Aorta (tissue), 5 donors: ENCODE measurements at regions of chr9 and their contacts with region 1.

Region 1: GRCh38 chr9:21789541-21790037 is 12.8 kb upstream of the MTAP start:
- DNase-seq: peak in 1 of 2 donors; percentile 62
- ATAC-seq: peak; percentile 89
- H3K4me3 ChIP-seq: no peak overlapping the region
- H3K27ac ChIP-seq: no peak overlapping the region
- H3K4me1 ChIP-seq: no peaks in the 10 kb centered on the region
- H3K27me3 ChIP-seq: no peaks in the 10 kb centered on the region

Region 2: DNA sequence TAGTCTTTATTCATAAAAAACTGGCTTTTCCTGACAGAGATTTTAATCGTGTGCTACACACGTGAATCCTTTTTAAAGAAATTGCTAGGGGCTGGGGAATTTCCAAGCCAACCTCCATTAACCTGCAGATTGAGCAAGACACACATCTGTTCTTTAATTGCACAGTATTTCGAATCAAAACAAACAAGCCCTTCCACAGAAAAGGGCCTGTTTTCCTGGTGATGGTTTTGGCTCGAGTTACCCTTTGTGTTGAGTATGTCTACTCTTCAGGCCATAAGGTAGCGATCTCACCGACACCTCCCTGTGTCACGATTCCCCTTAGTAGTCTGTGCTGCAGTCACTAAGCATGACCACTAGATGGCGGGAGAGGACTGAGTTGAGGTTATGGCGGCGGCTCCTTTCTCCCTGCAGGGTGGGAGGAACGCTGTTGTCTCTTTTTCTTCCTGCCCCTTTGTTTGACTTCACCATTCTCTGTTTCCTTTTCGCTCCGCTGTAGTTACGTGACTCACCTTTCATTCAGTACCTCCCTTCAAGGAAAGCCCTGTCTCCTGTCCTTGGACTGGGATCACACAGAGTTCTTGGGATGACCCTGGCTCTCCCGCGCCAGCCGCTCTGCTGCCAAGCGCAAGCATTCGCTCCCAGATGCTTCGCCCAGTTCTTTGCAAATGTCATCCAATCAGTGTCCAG is 1863.6 kb before region 1 on chr9:
- intact Hi-C with region 1: loop called in 1 of 2 experiments (anchors 10 kb)
- DNase-seq: peak in 1 of 2 donors; percentile 69
- ATAC-seq: peak; percentile 92
- H3K4me3 ChIP-seq: peak overlapping the region in 1 of 2 donors; percentile 6
- H3K27ac ChIP-seq: no peak overlapping the region
- H3K4me1 ChIP-seq: no peaks in the 10 kb centered on the region
- H3K27me3 ChIP-seq: no peaks in the 10 kb centered on the region

Region 3: DNA sequence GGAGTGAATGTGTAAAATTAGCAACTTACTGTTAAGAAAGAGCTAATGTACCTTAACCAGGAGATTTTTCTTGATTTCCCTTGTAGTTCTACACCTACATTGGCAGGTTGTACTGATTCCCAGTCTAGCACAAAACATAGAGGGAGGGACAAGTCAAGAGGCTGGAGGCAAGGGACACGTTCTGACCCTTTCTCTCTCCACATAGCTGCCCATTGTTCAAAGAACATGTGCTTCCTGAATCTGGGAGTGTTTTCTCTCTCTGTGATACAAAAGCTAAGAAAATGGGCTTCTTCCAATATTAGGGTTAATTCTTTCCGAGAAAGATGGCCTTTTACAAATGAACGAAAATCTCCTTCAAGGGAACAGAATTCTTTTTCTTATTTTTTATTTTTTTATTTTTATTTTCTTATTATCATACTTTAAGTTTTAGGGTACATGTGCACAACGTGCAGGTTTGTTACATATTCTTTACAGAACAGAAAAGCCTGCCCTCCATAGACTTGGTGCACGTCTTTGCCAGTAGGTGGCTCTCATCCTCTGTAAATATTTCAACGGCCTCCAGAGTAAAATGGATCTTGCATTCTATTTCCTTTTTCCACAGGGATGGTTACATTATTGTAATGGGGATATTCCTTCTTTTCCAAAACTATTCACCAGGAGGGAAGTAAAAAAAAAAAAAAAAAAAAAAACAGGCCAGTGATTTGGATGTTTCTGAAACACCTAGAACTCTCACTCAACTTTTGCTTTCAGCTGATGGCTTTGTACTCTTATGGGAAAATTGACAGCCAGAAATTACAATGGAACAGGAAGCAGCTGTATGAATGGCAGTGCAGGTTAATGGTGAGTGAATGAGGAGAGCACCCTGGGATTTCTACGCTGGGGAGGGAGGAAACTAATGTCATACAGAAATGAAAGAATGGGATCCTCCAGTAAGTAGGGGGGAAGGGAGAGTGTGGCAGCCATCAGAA is 471.3 kb before region 1 on chr9:
- intact Hi-C with region 1: loop called (anchors 5 kb)
- DNase-seq: peak in 1 of 2 donors; percentile 41
- ATAC-seq: peak; percentile 72
- H3K4me3 ChIP-seq: no peak overlapping the region
- H3K27ac ChIP-seq: no peak overlapping the region
- H3K4me1 ChIP-seq: no peaks in the 10 kb centered on the region
- H3K27me3 ChIP-seq: no peaks in the 10 kb centered on the region

Region 4: DNA sequence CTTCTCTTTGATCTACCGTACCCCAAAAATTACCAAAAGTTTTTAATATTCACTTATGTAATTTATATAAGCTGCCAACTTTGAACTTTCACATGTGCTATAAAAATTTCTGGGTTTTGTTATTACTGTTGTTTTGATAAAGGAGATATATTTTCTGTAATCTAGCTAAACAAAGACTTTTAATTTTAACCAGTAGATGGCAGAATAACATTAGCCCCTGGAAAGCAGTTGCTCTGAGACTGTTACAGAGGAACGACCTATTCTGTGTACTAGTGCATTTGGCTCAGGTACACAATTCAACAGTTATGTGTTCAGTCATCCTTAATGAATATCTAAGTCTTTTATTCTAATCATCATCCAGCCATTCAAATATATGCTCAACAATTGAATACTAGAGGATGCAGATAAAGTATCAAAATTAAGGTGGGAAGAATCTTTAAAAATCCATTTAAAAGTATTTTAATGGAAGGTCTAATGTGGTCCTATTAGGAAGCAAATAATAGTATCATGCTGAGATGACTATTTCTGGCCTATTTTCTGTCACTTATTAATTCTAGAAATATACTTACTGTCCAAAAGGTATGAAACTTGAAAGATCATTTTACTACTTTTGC is 463.0 kb before region 1 on chr9:
- intact Hi-C with region 1: loop called in 1 of 2 experiments (anchors 5 kb)
- DNase-seq: no peak
- ATAC-seq: peak; percentile 79
- H3K4me3 ChIP-seq: no peak overlapping the region
- H3K27ac ChIP-seq: no peak overlapping the region
- H3K4me1 ChIP-seq: peaks cover 0 to 2% of the 10 kb centered on the region in 2 donors
- H3K27me3 ChIP-seq: no peaks in the 10 kb centered on the region

Region 5: DNA sequence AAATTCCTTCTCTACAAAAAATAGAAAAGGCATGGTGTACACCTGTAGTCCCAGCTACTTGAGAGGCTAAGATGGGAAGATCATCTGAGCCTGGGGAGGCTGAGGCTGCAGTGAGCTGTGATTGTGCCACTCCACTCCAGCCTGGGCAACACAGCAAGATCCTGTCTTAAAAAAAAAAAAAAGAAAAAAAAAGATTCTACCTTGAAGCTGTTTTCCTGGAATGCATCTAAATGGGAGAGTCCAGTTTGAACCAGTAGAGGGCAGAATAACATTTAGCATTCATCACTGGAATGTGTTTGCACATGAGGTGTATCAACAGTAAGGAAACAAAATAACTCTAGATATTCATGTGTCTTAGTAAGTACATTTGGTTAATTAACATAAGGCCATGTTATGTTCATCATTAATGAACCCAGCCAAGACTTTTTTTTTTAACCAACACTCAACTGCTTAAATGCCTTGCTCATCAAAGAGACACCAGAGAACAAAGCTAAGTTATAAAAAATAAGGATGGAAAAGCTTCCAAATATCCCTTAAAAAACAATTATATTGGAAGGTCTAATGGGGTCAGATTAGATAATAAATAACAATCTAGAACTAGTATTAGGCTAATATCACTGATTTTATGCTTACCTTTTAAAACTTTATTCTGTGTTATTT is 323.6 kb before region 1 on chr9:
- intact Hi-C with region 1: loop called (anchors 5 kb)
- DNase-seq: no peak
- ATAC-seq: no peak
- H3K4me3 ChIP-seq: no peak overlapping the region
- H3K27ac ChIP-seq: no peak overlapping the region
- H3K4me1 ChIP-seq: no peaks in the 10 kb centered on the region
- H3K27me3 ChIP-seq: no peaks in the 10 kb centered on the region

Region 6: GRCh38 chr9:21709464-21710058 is 80.0 kb before region 1 on chr9:
- intact Hi-C with region 1: loop called in 1 of 2 experiments (anchors 5 kb)
- DNase-seq: no peak
- ATAC-seq: no peak
- H3K4me3 ChIP-seq: no peak overlapping the region
- H3K27ac ChIP-seq: no peak overlapping the region
- H3K4me1 ChIP-seq: no peaks in the 10 kb centered on the region
- H3K27me3 ChIP-seq: no peaks in the 10 kb centered on the region

Region 7: DNA sequence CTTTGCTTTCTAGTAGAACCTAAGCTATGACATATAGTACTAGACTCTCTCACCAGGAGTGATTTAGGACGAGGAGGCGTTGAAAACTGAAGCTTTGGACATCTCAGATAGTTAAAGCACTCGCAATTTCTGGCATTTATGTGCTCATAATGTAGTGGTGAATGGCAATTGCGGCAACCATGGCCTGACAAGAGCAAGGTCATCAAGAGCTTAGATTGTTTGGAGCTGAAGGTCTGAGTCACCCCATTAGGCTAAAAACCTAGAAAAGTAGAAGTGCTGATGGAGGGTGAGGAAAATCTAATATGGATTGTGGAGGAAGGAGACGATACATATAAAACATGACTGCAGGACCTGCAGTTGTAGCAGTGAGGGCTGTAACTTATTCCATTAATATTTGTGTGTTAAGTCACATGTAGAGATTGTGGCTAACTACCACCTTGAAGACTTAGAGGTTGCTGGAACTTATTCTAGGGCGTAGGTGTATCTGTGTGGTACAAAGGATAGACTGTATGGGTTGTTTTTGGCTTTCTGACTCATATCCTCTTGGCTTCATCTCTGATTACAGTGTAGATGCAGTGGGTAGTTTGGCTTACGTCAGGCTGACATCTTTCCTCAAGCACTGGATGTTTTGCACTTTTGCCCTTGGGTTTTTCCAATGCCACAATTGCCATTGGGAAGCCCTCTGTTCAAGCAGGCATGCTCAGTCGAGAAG is 358.4 kb after region 1 on chr9:
- intact Hi-C with region 1: no loop called
- DNase-seq: no peak
- ATAC-seq: no peak
- H3K4me3 ChIP-seq: no peak overlapping the region
- H3K27ac ChIP-seq: no peak overlapping the region
- H3K4me1 ChIP-seq: no peaks in the 10 kb centered on the region
- H3K27me3 ChIP-seq: no peaks in the 10 kb centered on the region